ENCODE measurements at regions of chr1 and their contacts with region 1.

Region 1: GRCh38 chr1:152459596-152460528 is 45.8 kb upstream of the CRNN start:
- DNase-seq: peak; percentile 41 to 79 (median 73)
- H3K4me3 ChIP-seq: no peak overlapping the region
- H3K27ac ChIP-seq: no peak overlapping the region
- H3K4me1 ChIP-seq: peaks cover 0 to 6% of the 10 kb centered on the region in 2 donors
- H3K27me3 ChIP-seq: no peaks in the 10 kb centered on the region
- CTCF ChIP-seq: peak; percentile 41 to 74 (median 58)
- POLR2A ChIP-seq: no peak

Region 2: DNA sequence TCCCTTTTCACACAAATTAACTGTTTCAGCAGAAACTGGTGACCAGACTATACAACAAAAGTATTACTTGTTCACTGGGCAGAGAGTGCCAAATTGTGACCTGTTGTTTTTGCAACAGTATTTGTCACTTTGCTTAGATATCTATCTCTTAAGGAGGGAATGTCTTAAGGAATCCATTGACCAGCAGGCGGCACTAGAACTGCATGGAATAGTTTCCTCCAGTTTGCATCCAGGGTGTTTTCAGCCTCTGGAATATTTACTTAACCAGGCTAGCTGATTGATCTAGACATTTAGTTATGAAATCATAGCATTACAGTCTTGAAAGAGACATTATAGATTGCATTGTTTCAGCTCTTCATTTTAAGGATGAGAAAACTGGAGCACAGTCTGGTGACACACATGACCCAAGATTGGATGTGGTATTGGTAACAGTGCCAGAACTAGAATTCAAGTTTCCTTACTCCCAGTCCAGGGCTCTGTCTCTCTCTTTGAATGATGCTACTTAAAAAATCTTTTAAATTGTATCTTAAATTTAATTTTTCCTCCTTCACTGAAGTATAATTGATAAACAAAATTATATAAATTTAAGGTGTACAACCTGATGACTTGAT is 317.8 kb before region 1 on chr1:
- intact Hi-C with region 1: loop called in 1 of 2 experiments (anchors 5 kb)
- DNase-seq: peak; percentile 31 to 85 (median 64)
- H3K4me3 ChIP-seq: no peak overlapping the region
- H3K27ac ChIP-seq: no peak overlapping the region
- H3K4me1 ChIP-seq: no peaks in the 10 kb centered on the region
- H3K27me3 ChIP-seq: no peaks in the 10 kb centered on the region
- CTCF ChIP-seq: peak; percentile 73 to 90 (median 84)
- POLR2A ChIP-seq: no peak

Region 3: DNA sequence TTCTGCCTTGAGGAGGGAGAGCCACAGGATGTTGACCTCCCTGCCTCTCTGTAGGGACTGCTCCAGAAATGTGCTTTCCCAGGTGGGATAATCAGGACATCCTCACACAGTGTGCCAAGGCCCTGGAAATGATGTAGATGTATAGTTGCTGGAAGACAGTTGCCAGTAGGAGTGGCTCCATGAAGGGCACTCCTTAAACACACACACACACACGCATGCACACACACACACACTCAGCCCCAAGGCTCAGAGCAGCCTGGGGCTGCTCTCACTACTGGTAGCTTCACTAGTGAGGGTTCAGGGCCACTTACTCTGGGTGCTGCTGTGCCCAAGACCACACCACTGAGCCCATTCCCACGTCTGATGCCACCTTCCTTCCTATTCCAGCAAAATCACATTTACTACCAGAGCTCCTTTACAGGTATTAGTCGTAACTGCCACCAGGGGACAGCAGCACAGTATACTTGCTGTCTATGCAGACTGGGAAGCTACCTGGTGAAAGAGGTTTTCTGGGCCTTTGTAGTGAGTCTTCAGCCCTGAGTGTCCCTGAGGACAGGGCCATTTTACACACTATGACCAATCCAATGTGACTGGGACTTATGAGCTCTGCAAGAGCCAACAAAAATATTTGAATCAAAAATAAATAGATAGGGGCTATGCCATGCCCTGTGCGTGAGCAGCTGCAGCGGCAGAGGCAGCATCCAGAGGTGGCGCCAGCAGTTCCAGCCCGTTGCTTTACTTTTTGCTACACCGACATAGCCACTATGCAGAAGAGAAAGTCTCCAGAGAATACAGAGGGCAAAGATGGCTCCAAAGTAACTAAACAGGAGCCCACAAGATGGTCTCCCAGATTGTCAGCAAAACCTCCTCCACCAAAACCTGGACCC is 60.8 kb before region 1 on chr1:
- intact Hi-C with region 1: no loop called
- DNase-seq: no peak
- H3K4me3 ChIP-seq: no peak overlapping the region
- H3K27ac ChIP-seq: no peak overlapping the region
- H3K4me1 ChIP-seq: no peaks in the 10 kb centered on the region
- H3K27me3 ChIP-seq: no peaks in the 10 kb centered on the region
- CTCF ChIP-seq: peak in 2 of 6 experiments; percentile 17 to 19
- POLR2A ChIP-seq: no peak

Region 4: GRCh38 chr1:152811050-152811449 is 351.2 kb after region 1 on chr1:
- intact Hi-C with region 1: no loop called
- DNase-seq: no peak
- H3K4me3 ChIP-seq: no peak overlapping the region
- H3K27ac ChIP-seq: no peak overlapping the region
- H3K4me1 ChIP-seq: no peaks in the 10 kb centered on the region
- H3K27me3 ChIP-seq: no peaks in the 10 kb centered on the region
- CTCF ChIP-seq: no peak
- POLR2A ChIP-seq: no peak